CD4-positive, alpha-beta memory T cell (primary cell): ENCODE measurements at regions of chr6 and their contacts with region 1.

Region 1: DNA sequence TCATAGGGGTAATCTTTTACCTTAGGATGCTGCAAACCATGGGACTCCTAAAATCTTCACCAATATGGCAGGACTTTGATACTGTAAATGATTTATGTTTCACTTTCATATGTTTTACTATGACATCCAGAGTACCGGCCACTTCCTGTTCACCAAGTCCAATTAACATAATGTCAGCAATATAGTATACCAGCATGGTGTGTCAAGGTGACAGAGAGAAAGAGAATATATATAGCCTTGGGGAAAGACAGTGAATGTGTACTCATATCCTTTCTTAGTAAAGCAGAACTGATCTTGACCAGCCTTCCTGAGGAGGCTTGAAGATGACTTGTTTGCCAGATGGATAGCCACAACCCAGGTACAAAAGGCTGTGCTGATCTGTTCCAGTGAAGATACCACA is 127.9 kb downstream of the NRN1 start:
- DNase-seq: no peak
- H3K4me3 ChIP-seq: no peak overlapping the region
- H3K4me3 Mint-ChIP-seq: no peak overlapping the region
- H3K27ac ChIP-seq: no peak overlapping the region
- H3K27ac Mint-ChIP-seq: no peak overlapping the region
- H3K4me1 ChIP-seq: peaks cover 9% of the 10 kb centered on the region
- H3K4me1 Mint-ChIP-seq: peaks cover 6 to 10% (median 8%) of the 10 kb centered on the region in 4 donors
- H3K27me3 ChIP-seq: no peaks in the 10 kb centered on the region
- H3K27me3 Mint-ChIP-seq: no peaks in the 10 kb centered on the region

Region 2: DNA sequence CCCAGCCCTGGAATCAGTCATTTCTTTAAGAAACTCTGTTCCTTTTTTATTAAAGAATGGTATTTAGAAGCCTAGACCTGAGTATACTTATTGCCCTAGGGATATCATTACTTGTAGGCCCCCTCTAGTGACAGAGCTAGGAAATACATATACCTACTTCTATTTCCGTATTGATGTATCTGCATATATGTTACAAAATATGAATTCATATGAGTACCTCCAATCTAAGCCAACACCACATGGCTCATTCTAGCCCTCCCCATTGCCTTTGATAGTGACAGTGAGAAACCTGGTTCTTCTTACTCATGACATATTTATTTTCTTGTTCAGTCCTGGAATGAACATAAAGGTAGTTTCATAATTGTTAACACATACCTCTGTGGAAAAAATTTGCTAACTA is 480.3 kb before region 1 on chr6:
- CTCF ChIA-PET with region 1: no interaction called
- POLR2A ChIA-PET with region 1: no interaction called
- intact Hi-C with region 1: no loop called
- DNase-seq: peak in 4 of 5 donors; percentile 32 to 40 (median 36)
- H3K4me3 ChIP-seq: no peak overlapping the region
- H3K4me3 Mint-ChIP-seq: no peak overlapping the region
- H3K27ac ChIP-seq: no peak overlapping the region
- H3K27ac Mint-ChIP-seq: no peak overlapping the region
- H3K4me1 ChIP-seq: no peaks in the 10 kb centered on the region
- H3K4me1 Mint-ChIP-seq: peaks cover 5 to 24% (median 14%) of the 10 kb centered on the region in 4 donors
- H3K27me3 ChIP-seq: no peaks in the 10 kb centered on the region
- H3K27me3 Mint-ChIP-seq: no peaks in the 10 kb centered on the region

Region 3: DNA sequence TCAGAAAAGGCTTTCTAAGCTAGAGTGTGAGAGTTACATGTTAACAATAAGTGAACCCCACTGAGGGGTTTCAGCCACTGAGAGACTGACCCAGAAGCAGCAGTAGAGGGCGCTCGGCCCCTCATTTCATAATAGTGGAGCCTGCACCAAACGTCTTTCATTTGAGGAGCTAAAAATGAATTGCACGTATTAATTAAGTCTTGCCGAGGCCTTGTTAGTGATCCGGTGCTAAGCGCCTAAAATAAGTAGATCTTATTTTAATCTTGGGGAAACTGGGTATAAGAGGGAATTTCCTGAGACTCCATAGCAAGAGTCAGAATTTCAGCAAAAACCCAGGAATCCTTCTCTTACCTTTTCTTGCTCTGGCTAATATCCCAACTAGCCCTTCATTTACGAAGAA is 407.7 kb before region 1 on chr6:
- CTCF ChIA-PET with region 1: interaction called, 9 read pairs
- POLR2A ChIA-PET with region 1: no interaction called
- intact Hi-C with region 1: loop called (anchors 1 kb)
- DNase-seq: peak in 4 of 5 donors; percentile 36 to 59 (median 44)
- H3K4me3 ChIP-seq: no peak overlapping the region
- H3K4me3 Mint-ChIP-seq: no peak overlapping the region
- H3K27ac ChIP-seq: no peak overlapping the region
- H3K27ac Mint-ChIP-seq: no peak overlapping the region
- H3K4me1 ChIP-seq: no peaks in the 10 kb centered on the region
- H3K4me1 Mint-ChIP-seq: peaks cover 0 to 7% (median 3%) of the 10 kb centered on the region in 4 donors
- H3K27me3 ChIP-seq: no peaks in the 10 kb centered on the region
- H3K27me3 Mint-ChIP-seq: no peaks in the 10 kb centered on the region

Region 4: GRCh38 chr6:5590187-5590586 is 288.6 kb before region 1 on chr6:
- CTCF ChIA-PET with region 1: no interaction called
- POLR2A ChIA-PET with region 1: no interaction called
- intact Hi-C with region 1: no loop called
- DNase-seq: no peak
- H3K4me3 ChIP-seq: no peak overlapping the region
- H3K4me3 Mint-ChIP-seq: no peak overlapping the region
- H3K27ac ChIP-seq: no peak overlapping the region
- H3K27ac Mint-ChIP-seq: no peak overlapping the region
- H3K4me1 ChIP-seq: no peaks in the 10 kb centered on the region
- H3K4me1 Mint-ChIP-seq: peaks cover 0 to 4% (median under 1%) of the 10 kb centered on the region in 4 donors
- H3K27me3 ChIP-seq: no peaks in the 10 kb centered on the region
- H3K27me3 Mint-ChIP-seq: no peaks in the 10 kb centered on the region

Region 5: GRCh38 chr6:5860849-5861248 is 17.9 kb before region 1 on chr6:
- CTCF ChIA-PET with region 1: no interaction called
- POLR2A ChIA-PET with region 1: no interaction called
- intact Hi-C with region 1: no loop called
- DNase-seq: no peak
- H3K4me3 ChIP-seq: no peak overlapping the region
- H3K4me3 Mint-ChIP-seq: no peak overlapping the region
- H3K27ac ChIP-seq: no peak overlapping the region
- H3K27ac Mint-ChIP-seq: peak overlapping the region in 1 of 7 donors; percentile 6
- H3K4me1 ChIP-seq: peaks cover 10% of the 10 kb centered on the region
- H3K4me1 Mint-ChIP-seq: peaks cover 12 to 20% (median 15%) of the 10 kb centered on the region in 4 donors
- H3K27me3 ChIP-seq: no peaks in the 10 kb centered on the region
- H3K27me3 Mint-ChIP-seq: peaks cover 0 to 2% of the 10 kb centered on the region in 2 donors